Ovary (tissue), 10 donors: ENCODE measurements at regions of chr11 and their contacts with region 1.

Region 1: DNA sequence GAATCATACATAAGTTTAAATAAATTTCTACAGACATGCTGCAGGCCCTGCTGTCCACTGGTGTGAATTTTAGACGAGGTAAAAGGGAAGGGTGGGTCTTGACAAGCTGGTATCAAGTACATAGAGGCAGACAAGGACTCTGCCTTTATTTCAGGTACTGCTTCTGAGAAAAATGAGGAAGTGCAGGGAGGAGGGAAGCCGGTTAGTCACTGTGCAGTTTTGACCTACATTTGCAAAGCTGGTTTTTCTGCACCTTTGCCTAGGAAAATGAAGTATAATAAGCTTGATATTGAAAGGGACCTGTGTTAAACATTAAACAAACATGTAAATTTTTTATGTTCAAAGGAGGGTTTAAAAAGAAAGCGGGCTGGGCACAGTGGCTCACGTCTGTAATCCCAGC is 24.6 kb downstream of the TMEM45B start:
- DNase-seq: no peak
- H3K4me3 ChIP-seq: no peak overlapping the region
- H3K27ac ChIP-seq: no peak overlapping the region
- H3K4me1 ChIP-seq: no peaks in the 10 kb centered on the region
- H3K27me3 ChIP-seq: no peaks in the 10 kb centered on the region
- CTCF ChIP-seq: no peak
- EP300 ChIP-seq: no peak
- POLR2A ChIP-seq: no peak

Region 2: GRCh38 chr11:131824771-131825170 is 1984.5 kb after region 1 on chr11:
- intact Hi-C with region 1: loop called in 1 of 4 experiments (anchors 5 kb)
- DNase-seq: no peak
- H3K4me3 ChIP-seq: no peak overlapping the region
- H3K27ac ChIP-seq: no peak overlapping the region
- H3K4me1 ChIP-seq: no peaks in the 10 kb centered on the region
- H3K27me3 ChIP-seq: no peaks in the 10 kb centered on the region
- CTCF ChIP-seq: no peak
- EP300 ChIP-seq: no peak
- POLR2A ChIP-seq: no peak